Heart right ventricle (tissue), 16 donors: ENCODE measurements at regions of chr13 and their contacts with region 1.

Region 1: GRCh38 chr13:43804461-43805070 is 17.8 kb upstream of the ENOX1 start:
- DNase-seq: peak in 1 of 2 donors; percentile 47
- ATAC-seq: peak in 1 of 8 donors; percentile 55
- H3K4me3 ChIP-seq: no peak overlapping the region
- H3K27ac ChIP-seq: peak overlapping the region in 1 of 10 donors; percentile 27
- H3K4me1 ChIP-seq: peaks cover 0 to 7% (median 0%) of the 10 kb centered on the region in 9 donors
- H3K27me3 ChIP-seq: no peaks in the 10 kb centered on the region
- CTCF ChIP-seq: peak; percentile 35 to 76 (median 65)

Region 2: GRCh38 chr13:42836930-42837690 is 967.5 kb before region 1 on chr13:
- intact Hi-C with region 1: loop called in 1 of 10 experiments (anchors 10 kb)
- DNase-seq: peak in 1 of 2 donors; percentile 9
- ATAC-seq: no peak
- H3K4me3 ChIP-seq: no peak overlapping the region
- H3K27ac ChIP-seq: peak overlapping the region in 1 of 10 donors; percentile 39
- H3K4me1 ChIP-seq: peaks cover 0 to 10% (median 0%) of the 10 kb centered on the region in 9 donors
- H3K27me3 ChIP-seq: no peaks in the 10 kb centered on the region
- CTCF ChIP-seq: peak in 8 of 9 donors; percentile 8 to 61 (median 36)

Region 3: GRCh38 chr13:42985312-42986175 is 819.0 kb before region 1 on chr13:
- intact Hi-C with region 1: loop called in 1 of 10 experiments (anchors 10 kb)
- DNase-seq: peak in 1 of 2 donors; percentile 29
- ATAC-seq: peak in 7 of 8 donors; percentile 51 to 93 (median 72)
- H3K4me3 ChIP-seq: no peak overlapping the region
- H3K27ac ChIP-seq: peak overlapping the region in 3 of 10 donors; percentile 7 to 53 (median 36)
- H3K4me1 ChIP-seq: peaks cover 0 to 45% (median 27%) of the 10 kb centered on the region in 9 donors
- H3K27me3 ChIP-seq: no peaks in the 10 kb centered on the region
- CTCF ChIP-seq: no peak

Region 4: GRCh38 chr13:43196086-43196621 is 608.4 kb before region 1 on chr13:
- intact Hi-C with region 1: loop called in 8 of 10 experiments (anchors 5 to 10 kb)
- DNase-seq: peak; percentile 16 to 47
- ATAC-seq: peak; percentile 57 to 91 (median 80)
- H3K4me3 ChIP-seq: peak overlapping the region in 1 of 10 donors; percentile 21
- H3K27ac ChIP-seq: peak overlapping the region in 1 of 10 donors; percentile 67
- H3K4me1 ChIP-seq: peaks cover 0 to 16% (median 10%) of the 10 kb centered on the region in 9 donors
- H3K27me3 ChIP-seq: no peaks in the 10 kb centered on the region
- CTCF ChIP-seq: peak in 6 of 9 donors; percentile 14 to 58 (median 42)